ENCODE measurements at regions of chr1 and their contacts with region 1.

Region 1: DNA sequence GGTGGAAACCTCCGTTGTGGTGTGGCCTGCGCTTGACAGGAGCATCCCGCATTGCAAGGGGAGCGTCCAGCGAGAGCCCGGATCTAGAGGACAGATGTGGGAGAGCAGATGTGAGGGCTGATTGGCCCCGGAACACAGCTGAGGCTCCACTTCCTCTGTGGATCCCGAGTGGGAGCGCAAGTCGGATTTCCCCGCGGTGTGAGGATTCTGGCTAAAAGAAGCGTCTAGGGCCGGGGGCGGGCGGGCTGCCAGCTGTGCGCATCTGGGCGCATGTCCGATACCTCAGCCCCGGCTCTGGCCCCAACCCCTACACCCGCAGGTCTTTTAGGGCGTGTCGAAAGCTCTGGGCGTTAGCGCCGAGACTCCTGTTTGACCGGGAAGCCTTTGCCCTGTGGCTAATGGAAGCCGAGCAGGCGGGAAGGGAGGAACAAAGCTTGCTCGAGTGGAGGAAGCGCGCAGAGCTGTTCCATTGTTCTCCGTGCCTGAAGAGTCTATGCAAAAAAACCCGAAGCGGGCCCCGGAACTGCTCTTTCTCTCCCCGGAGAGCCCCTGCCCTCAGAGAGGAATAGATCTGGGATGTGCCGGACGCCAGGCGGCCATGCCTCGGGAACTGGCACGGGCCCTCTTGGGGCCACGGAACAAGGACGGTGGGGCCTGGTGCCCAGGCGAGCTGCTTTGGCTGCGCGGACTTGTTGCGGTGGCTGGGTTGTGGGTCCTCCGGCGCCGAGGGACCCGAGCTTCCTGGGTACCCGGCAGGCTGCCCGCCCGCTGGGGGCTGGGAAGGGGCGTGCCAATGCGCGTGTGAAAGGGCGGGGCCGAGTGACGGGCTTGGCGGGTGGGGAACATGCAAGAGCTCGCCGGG is 111.1 kb downstream of the NAV1 start:
- DNase-seq: peak; percentile 86 to 89
- ATAC-seq: peak; percentile 64 to 79 (median 72)
- H3K4me3 ChIP-seq: peak overlapping the region; percentile 60 to 90 (median 67)
- H3K27ac ChIP-seq: peak overlapping the region in 9 of 10 donors; percentile 64 to 95 (median 81)
- H3K4me1 ChIP-seq: peaks cover 16 to 88% (median 51%) of the 10 kb centered on the region in 9 donors
- H3K27me3 ChIP-seq: peaks cover 0 to 17% (median 0%) of the 10 kb centered on the region in 7 donors
- CTCF ChIP-seq: no peak

Region 2: DNA sequence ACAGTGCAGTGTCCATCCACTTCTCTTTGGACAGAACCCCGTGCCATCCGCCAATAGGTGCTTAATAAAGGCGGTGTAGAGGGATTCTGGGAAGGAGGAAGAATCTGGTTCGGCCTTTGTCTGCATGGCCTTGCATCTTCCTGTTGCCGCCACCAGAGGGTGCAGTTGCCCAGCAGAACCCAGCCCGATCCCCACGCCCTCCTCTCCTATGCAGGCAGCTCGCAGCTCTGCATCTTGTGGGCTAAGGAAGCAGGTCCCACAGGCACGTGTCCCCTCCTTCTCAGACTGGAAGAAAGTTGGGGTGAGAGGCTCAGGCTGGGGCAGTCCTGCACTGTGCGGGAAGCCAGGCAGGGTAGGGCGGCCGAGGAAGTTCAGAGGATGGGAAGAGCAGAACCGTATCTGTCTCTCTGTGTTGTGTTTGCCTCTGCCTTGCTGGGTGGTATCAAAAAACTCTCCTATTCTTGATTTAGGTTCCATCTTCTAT is 90.3 kb before region 1 on chr1:
- intact Hi-C with region 1: loop called in 3 of 10 experiments (anchors 5 to 10 kb)
- DNase-seq: peak; percentile 80 to 83
- ATAC-seq: peak; percentile 79 to 84 (median 82)
- H3K4me3 ChIP-seq: no peak overlapping the region
- H3K27ac ChIP-seq: peak overlapping the region in 6 of 10 donors; percentile 5 to 87 (median 46)
- H3K4me1 ChIP-seq: peaks cover 9 to 100% (median 84%) of the 10 kb centered on the region in 9 donors
- H3K27me3 ChIP-seq: no peaks in the 10 kb centered on the region
- CTCF ChIP-seq: peak; percentile 81 to 96 (median 93)

Region 3: GRCh38 chr1:201565024-201565730 is 84.8 kb before region 1 on chr1:
- intact Hi-C with region 1: loop called in 4 of 10 experiments (anchors 5 to 10 kb)
- DNase-seq: peak in 1 of 2 donors; percentile 36
- ATAC-seq: peak in 3 of 8 donors; percentile 13 to 66 (median 26)
- H3K4me3 ChIP-seq: no peak overlapping the region
- H3K27ac ChIP-seq: peak overlapping the region in 6 of 10 donors; percentile 38 to 67 (median 49)
- H3K4me1 ChIP-seq: peaks cover 13 to 100% (median 75%) of the 10 kb centered on the region in 9 donors
- H3K27me3 ChIP-seq: no peaks in the 10 kb centered on the region
- CTCF ChIP-seq: no peak

Region 4: DNA sequence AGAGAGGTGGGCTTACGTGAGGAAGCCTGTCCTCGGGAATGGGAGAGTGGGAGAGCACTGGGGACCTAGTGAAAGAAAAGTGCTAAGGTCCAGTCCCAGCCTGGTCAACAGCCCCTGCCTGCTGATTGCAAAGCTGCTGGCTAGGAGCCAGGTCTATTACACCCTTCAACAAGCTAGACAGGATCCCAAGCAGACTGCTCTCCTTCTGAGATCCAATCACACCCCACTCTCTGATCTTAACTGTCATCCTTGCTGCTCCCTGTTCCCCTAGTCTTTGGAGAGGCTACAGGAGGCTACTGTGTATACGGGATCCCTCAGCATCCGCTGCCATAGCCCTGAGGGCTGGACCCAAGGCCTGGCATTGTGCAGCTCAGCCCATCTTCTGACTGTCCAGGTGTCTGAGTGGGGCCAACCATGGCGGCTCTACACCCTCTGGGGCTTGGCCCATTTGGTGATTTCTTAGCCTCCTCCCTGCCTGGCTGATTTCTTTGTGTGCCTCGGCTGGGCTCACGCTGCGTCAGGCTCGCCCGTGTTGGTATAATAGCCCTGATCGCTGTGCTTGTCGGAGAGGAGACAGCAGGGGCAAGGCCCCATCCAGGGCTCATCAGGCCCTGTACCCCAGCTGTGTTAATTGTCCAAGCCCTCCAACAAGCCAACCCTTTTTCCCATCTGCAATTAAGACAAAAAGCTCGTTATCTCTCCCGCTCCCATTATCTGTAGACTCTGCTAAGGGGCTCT is 67.1 kb before region 1 on chr1:
- intact Hi-C with region 1: loop called in 1 of 10 experiments (anchors 5 kb)
- DNase-seq: no peak
- ATAC-seq: peak in 6 of 8 donors; percentile 22 to 52 (median 34)
- H3K4me3 ChIP-seq: no peak overlapping the region
- H3K27ac ChIP-seq: peak overlapping the region in 3 of 10 donors; percentile 10 to 57 (median 31)
- H3K4me1 ChIP-seq: peaks cover 0 to 48% (median 36%) of the 10 kb centered on the region in 9 donors
- H3K27me3 ChIP-seq: no peaks in the 10 kb centered on the region
- CTCF ChIP-seq: no peak

Region 5: GRCh38 chr1:201696217-201696761 is 46.3 kb after region 1 on chr1:
- intact Hi-C with region 1: loop called in 7 of 10 experiments (anchors 5 to 10 kb)
- DNase-seq: peak; percentile 81 to 89
- ATAC-seq: peak; percentile 70 to 90 (median 82)
- H3K4me3 ChIP-seq: no peak overlapping the region
- H3K27ac ChIP-seq: peak overlapping the region; percentile 0 to 79 (median 54)
- H3K4me1 ChIP-seq: peaks cover 23 to 75% (median 70%) of the 10 kb centered on the region in 9 donors
- H3K27me3 ChIP-seq: no peaks in the 10 kb centered on the region
- CTCF ChIP-seq: peak in 3 of 9 donors; percentile 15 to 19 (median 16)

Region 6: GRCh38 chr1:201703621-201704439 is 53.8 kb after region 1 on chr1:
- intact Hi-C with region 1: loop called in 3 of 10 experiments (anchors 5 to 10 kb)
- DNase-seq: peak; percentile 85 to 90
- ATAC-seq: peak; percentile 89 to 94 (median 90)
- H3K4me3 ChIP-seq: no peak overlapping the region
- H3K27ac ChIP-seq: peak overlapping the region in 9 of 10 donors; percentile 20 to 81 (median 54)
- H3K4me1 ChIP-seq: peaks cover 13 to 46% (median 26%) of the 10 kb centered on the region in 9 donors
- H3K27me3 ChIP-seq: no peaks in the 10 kb centered on the region
- CTCF ChIP-seq: peak; percentile 93 to 99 (median 98)